ENCODE measurements at regions of chr2 and their contacts with region 1.

Region 1: GRCh38 chr2:177906041-177906718 is 166.4 kb downstream of the PDE11A start:
- DNase-seq: peak; percentile 73 to 83 (median 77)
- ATAC-seq: peak; percentile 99
- H3K4me3 ChIP-seq: no peak overlapping the region
- H3K27ac ChIP-seq: no peak overlapping the region
- H3K4me1 ChIP-seq: no peaks in the 10 kb centered on the region; a peak in 1 of 5 replicates
- H3K27me3 ChIP-seq: no peaks in the 10 kb centered on the region
- CTCF ChIP-seq: peak; percentile 85 to 98 (median 89)
- EP300 ChIP-seq: no peak
- POLR2A ChIP-seq: no peak
- RAD21 ChIP-seq: peak; percentile 65 to 75

Region 2: DNA sequence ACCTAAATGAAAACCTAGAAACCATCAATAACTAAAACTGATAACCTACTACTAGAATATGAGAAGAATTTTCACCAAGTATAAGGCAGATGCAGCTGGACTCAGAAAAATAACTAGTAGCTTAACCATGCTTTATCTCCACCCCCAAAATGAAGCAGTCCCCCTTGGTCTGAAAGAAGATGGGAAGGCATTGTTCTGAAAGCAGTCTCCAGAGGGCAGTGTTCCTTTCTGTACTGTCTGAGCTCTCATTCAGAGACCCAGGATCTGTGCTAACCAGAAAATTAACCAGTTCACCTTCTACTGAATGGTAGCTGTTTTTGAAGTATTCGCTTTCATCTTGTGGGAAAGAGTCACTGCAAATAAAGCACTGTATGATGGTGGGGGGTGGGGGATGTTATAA is 106.6 kb before region 1 on chr2:
- CTCF ChIA-PET with region 1: no interaction called
- POLR2A ChIA-PET with region 1: no interaction called
- in situ Hi-C with region 1: no loop called
- intact Hi-C with region 1: loop called (anchors 10 kb)
- DNase-seq: peak; percentile 24 to 59 (median 32)
- ATAC-seq: peak; percentile 99
- H3K4me3 ChIP-seq: no peak overlapping the region
- H3K27ac ChIP-seq: no peak overlapping the region
- H3K4me1 ChIP-seq: no peaks in the 10 kb centered on the region
- H3K27me3 ChIP-seq: peaks cover 0 to 2% of the 10 kb centered on the region in 2 experiments; a peak in 1 of 5 replicates
- CTCF ChIP-seq: peak; percentile 64 to 77 (median 73)
- EP300 ChIP-seq: no peak
- POLR2A ChIP-seq: no peak
- RAD21 ChIP-seq: peak; percentile 48 to 71

Region 3: GRCh38 chr2:178072383-178073301 is 166.5 kb after region 1 on chr2 and contains the start of gene PDE11A:
- CTCF ChIA-PET with region 1: no interaction called
- POLR2A ChIA-PET with region 1: no interaction called
- in situ Hi-C with region 1: no loop called
- intact Hi-C with region 1: loop called (anchors 1 kb)
- DNase-seq: peak; percentile 82 to 96 (median 86)
- ATAC-seq: peak; percentile 98
- H3K4me3 ChIP-seq: peak within 1 kb of the TSS; percentile 42
- H3K27ac ChIP-seq: peak within 1 kb of the TSS; percentile 51
- H3K4me1 ChIP-seq: peaks cover 27 to 55% of the 10 kb centered on the region in 2 experiments
- H3K27me3 ChIP-seq: no peaks in the 10 kb centered on the region
- CTCF ChIP-seq: no peak
- EP300 ChIP-seq: no peak
- POLR2A ChIP-seq: peak; percentile 87
- RAD21 ChIP-seq: no peak
- polyA plus RNA-seq, gene PDE11A: 3.2 to 3.9 TPM

Region 4: GRCh38 chr2:178084273-178084672 is 178.1 kb after region 1 on chr2:
- CTCF ChIA-PET with region 1: no interaction called
- POLR2A ChIA-PET with region 1: no interaction called
- in situ Hi-C with region 1: no loop called
- intact Hi-C with region 1: no loop called
- DNase-seq: no peak
- ATAC-seq: no peak
- H3K4me3 ChIP-seq: no peak overlapping the region
- H3K27ac ChIP-seq: no peak overlapping the region
- H3K4me1 ChIP-seq: no peaks in the 10 kb centered on the region
- H3K27me3 ChIP-seq: no peaks in the 10 kb centered on the region
- CTCF ChIP-seq: no peak
- EP300 ChIP-seq: no peak
- POLR2A ChIP-seq: no peak
- RAD21 ChIP-seq: no peak

Region 5: DNA sequence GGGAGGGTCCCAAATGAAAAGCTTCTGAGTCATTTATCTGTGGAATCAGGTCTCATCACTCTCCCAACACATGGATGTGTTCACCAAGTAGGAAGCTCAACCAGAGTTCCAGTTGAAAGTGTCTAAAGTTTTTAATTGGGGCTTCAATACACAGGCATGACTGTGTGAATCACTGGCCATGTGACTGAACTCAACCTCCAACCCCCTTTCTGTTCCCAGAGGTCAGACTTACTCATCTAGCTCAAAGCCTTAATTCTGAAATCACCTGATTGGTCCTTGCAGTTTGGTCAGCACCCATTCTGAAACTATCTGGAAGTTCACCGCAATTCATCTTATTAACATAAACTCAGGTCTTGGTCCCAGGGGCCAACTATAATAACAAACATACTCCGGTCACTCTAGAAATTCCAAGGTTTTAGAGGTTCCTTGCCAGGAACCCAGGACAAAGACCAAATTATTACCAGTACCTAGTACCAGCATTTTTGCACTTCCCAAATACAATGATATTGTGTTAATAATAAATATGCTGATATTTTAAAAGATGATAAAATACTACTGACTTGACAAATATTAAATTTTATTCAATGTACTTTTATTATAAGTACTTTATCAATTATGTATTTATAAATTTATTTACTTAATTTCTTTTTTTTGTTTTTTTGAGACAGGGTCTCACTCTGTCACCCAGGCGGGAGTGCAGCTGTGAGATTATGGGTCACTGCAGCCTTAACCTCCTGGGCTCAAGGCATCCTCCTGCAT is 195.3 kb after region 1 on chr2:
- CTCF ChIA-PET with region 1: no interaction called
- POLR2A ChIA-PET with region 1: no interaction called
- in situ Hi-C with region 1: no loop called
- intact Hi-C with region 1: loop called (anchors 5 kb)
- DNase-seq: peak in 3 of 4 experiments; percentile 17 to 48 (median 34)
- ATAC-seq: peak; percentile 82
- H3K4me3 ChIP-seq: no peak overlapping the region
- H3K27ac ChIP-seq: no peak overlapping the region
- H3K4me1 ChIP-seq: no peaks in the 10 kb centered on the region
- H3K27me3 ChIP-seq: no peaks in the 10 kb centered on the region
- CTCF ChIP-seq: no peak
- EP300 ChIP-seq: no peak
- POLR2A ChIP-seq: no peak
- RAD21 ChIP-seq: no peak

Region 6: GRCh38 chr2:178280244-178280852 is 374.2 kb after region 1 on chr2:
- CTCF ChIA-PET with region 1: no interaction called
- POLR2A ChIA-PET with region 1: no interaction called
- in situ Hi-C with region 1: no loop called
- intact Hi-C with region 1: no loop called
- DNase-seq: peak; percentile 62 to 73 (median 70)
- ATAC-seq: peak; percentile 55
- H3K4me3 ChIP-seq: no peak overlapping the region
- H3K27ac ChIP-seq: no peak overlapping the region
- H3K4me1 ChIP-seq: peaks cover 9 to 48% of the 10 kb centered on the region in 2 experiments
- H3K27me3 ChIP-seq: no peaks in the 10 kb centered on the region
- CTCF ChIP-seq: peak; percentile 55 to 74 (median 64); a peak in 5 of 6 replicates
- EP300 ChIP-seq: no peak
- POLR2A ChIP-seq: no peak
- RAD21 ChIP-seq: peak; percentile 26 to 74; a peak in 2 of 4 replicates